GM12878 (cell line): ENCODE measurements at regions of chr10 and their contacts with region 1.

Region 1: GRCh38 chr10:43138021-43138756 is at the start of gene CSGALNACT2:
- DNase-seq: no peak
- ATAC-seq: peak; percentile 87
- H3K4me3 ChIP-seq: peak within 1 kb of the TSS; percentile 91
- H3K27ac ChIP-seq: peak within 1 kb of the TSS; percentile 82
- H3K4me1 ChIP-seq: peaks cover 32% of the 10 kb centered on the region
- H3K27me3 ChIP-seq: no peaks in the 10 kb centered on the region
- CTCF ChIP-seq: no peak
- EP300 ChIP-seq: no peak
- POLR2A ChIP-seq: peak; percentile 86
- RAD21 ChIP-seq: no peak
- polyA plus RNA-seq, gene CSGALNACT2: 2.5 to 4.0 TPM

Region 2: DNA sequence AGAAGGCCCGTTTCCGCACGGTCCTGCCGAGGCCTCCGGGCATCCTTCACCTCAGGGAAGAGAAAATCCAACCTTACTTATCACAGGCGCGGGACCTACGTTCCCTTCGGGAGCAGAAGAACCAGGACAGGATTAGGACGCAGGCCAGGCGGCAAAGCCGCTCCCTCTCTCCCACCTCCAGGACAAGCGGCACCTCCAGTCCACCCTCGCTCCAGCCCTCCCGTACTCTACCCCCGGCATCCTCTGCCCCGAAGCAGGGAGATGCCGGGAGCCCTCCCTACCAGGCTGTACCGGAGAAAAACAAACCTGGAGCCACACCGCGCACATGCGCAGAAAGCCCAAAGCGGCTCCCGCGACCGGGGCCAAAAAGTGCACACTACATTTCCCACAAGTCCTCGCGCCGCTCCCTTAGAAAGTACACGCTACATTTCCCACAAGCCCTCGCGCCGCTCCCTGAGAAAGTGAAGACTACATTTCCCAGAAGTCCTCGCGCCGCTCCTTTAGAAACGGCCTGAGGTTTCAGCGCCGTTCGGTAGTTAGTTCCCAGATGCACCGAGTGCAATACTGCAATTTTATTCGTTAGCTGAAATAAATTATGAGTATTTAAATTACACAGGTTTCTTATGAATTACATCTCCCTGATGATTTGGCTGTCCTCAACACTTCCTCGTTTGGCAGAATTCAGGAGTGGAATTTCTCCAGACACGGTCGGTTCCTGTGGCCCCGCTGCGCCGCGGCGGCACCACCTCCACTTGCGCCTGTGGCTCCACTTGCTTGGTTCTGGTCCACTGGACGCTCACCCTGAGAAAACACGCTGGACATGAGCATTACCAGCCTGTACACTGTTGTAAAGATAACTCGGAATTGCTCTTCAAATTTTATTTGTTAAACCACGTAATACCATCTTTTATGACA is 585.4 kb before region 1 on chr10:
- CTCF ChIA-PET with region 1: no interaction called
- POLR2A ChIA-PET with region 1: no interaction called
- RAD21 ChIA-PET with region 1: no interaction called
- SMC1A ChIA-PET with region 1: no interaction called
- in situ Hi-C with region 1: loop called (anchors 10 kb)
- intact Hi-C with region 1: no loop called
- DNase-seq: peak; percentile 89
- ATAC-seq: peak; percentile 93
- H3K4me3 ChIP-seq: peak overlapping the region; percentile 84
- H3K27ac ChIP-seq: peak overlapping the region; percentile 69
- H3K4me1 ChIP-seq: no peaks in the 10 kb centered on the region; the same call in 1 of the 2 replicates
- H3K27me3 ChIP-seq: no peaks in the 10 kb centered on the region
- CTCF ChIP-seq: no peak
- EP300 ChIP-seq: no peak
- POLR2A ChIP-seq: no peak
- RAD21 ChIP-seq: no peak

Region 3: DNA sequence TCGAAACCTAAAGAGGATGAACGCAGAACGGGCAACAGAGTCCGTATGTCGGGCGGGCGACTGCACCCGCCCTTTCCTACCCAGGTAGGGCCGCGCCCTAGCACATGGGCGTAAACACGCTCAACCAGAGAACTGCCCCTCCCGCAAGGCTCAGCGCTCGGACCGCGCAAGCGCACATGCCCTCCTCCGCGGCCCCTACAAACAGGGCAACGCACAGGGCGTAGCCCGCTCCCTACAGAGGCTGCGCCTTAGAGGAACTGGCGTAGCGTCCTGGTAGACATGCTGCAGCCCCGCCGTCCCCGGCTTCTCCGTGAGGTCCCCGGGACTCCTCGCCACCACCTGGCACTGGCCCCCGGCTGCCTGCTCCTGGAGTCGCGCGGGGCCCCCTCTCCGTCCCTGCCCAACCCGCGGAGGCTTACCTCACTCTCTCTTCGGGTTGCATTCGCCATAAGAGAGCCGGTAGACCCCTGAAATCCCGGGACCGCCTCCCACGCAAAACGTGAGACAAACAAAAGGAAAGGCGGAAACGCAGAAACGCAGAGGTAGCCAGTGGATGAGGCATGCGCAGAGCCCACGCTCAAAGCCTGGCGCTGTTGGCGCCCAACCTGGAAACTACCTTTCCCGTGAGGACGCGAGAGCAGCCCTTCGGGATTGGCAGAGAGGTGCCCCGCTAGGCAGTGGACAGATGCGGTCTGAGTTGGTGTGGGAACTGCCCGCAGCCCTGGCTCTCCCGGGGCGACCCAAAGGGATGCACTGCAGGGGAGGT is 500.0 kb before region 1 on chr10 and contains the start of gene ZNF33B:
- CTCF ChIA-PET with region 1: no interaction called
- POLR2A ChIA-PET with region 1: no interaction called
- RAD21 ChIA-PET with region 1: no interaction called
- SMC1A ChIA-PET with region 1: no interaction called
- in situ Hi-C with region 1: loop called (anchors 25 kb)
- intact Hi-C with region 1: loop called (anchors 10 kb)
- DNase-seq: peak; percentile 92
- ATAC-seq: peak; percentile 98
- H3K4me3 ChIP-seq: peak within 1 kb of the TSS; percentile 89
- H3K27ac ChIP-seq: peak within 1 kb of the TSS; percentile 95
- H3K4me1 ChIP-seq: no peaks in the 10 kb centered on the region
- H3K27me3 ChIP-seq: no peaks in the 10 kb centered on the region
- CTCF ChIP-seq: no peak
- EP300 ChIP-seq: peak in 1 of 2 experiments; percentile 12; a peak in 1 of 4 replicates
- POLR2A ChIP-seq: peak; percentile 97
- RAD21 ChIP-seq: no peak
- polyA plus RNA-seq, gene ZNF33B: 5.3 to 6.2 TPM

Region 4: DNA sequence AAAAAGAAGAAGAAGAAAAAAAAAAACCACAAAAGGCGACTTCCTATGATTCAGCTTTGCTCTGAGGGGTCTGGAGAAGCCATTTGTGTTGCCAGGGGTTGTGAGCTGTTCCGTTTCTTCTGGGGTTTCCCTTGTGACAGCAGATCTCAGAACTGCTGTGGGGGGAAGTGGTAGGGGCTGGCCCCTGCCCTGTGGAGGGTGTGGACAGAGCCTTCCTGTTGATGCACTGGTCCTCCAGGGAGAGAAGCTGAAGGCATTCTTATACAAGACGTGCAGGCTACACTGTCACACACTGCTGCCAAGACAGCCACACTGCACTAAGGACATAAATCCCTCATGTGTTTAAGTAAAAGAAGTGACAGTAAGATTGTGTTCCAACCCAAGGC is 17.3 kb before region 1 on chr10:
- CTCF ChIA-PET with region 1: interaction called, 17 read pairs
- POLR2A ChIA-PET with region 1: interaction called, 6 read pairs
- RAD21 ChIA-PET with region 1: interaction called, 9 read pairs
- SMC1A ChIA-PET with region 1: interaction called, 4 read pairs
- in situ Hi-C with region 1: no loop called
- intact Hi-C with region 1: no loop called
- DNase-seq: peak; percentile 56
- ATAC-seq: peak; percentile 97
- H3K4me3 ChIP-seq: no peak overlapping the region
- H3K27ac ChIP-seq: peak overlapping the region; percentile 50; the same call in 1 of the 2 replicates
- H3K4me1 ChIP-seq: peaks cover 14% of the 10 kb centered on the region
- H3K27me3 ChIP-seq: no peaks in the 10 kb centered on the region
- CTCF ChIP-seq: no peak
- EP300 ChIP-seq: peak in 1 of 2 experiments; percentile 41; a peak in 1 of 4 replicates
- POLR2A ChIP-seq: no peak
- RAD21 ChIP-seq: no peak